ENCODE measurements at regions of chr7 and their contacts with region 1.

Region 1: GRCh38 chr7:150974468-150975391 is 3.4 kb downstream of the KCNH2 start:
- DNase-seq: peak in 4 of 5 donors; percentile 64 to 87 (median 82)
- ATAC-seq: peak in 2 of 4 donors; percentile 6
- H3K4me3 ChIP-seq: peak overlapping the region in 11 of 12 donors; percentile 11 to 59 (median 37)
- H3K27ac ChIP-seq: peak overlapping the region; percentile 66 to 99 (median 88)
- H3K4me1 ChIP-seq: peaks cover 0 to 94% (median 49%) of the 10 kb centered on the region in 12 donors
- H3K27me3 ChIP-seq: peaks cover 6 to 59% (median 21%) of the 10 kb centered on the region in 9 donors
- CTCF ChIP-seq: peak in 8 of 12 donors; percentile 10 to 41 (median 26)
- POLR2A ChIP-seq: no peak

Region 2: GRCh38 chr7:150787321-150788281 is 187.1 kb before region 1 on chr7:
- intact Hi-C with region 1: loop called in 1 of 10 experiments (anchors 10 kb)
- DNase-seq: peak in 2 of 5 donors; percentile 45
- ATAC-seq: peak; percentile 36 to 58 (median 38)
- H3K4me3 ChIP-seq: peak overlapping the region in 1 of 12 donors; percentile 17
- H3K27ac ChIP-seq: peak overlapping the region; percentile 68 to 95 (median 82)
- H3K4me1 ChIP-seq: peaks cover 4 to 68% (median 49%) of the 10 kb centered on the region in 12 donors
- H3K27me3 ChIP-seq: no peaks in the 10 kb centered on the region
- CTCF ChIP-seq: peak in 4 of 12 donors; percentile 9 to 21 (median 14)
- POLR2A ChIP-seq: no peak

Region 3: DNA sequence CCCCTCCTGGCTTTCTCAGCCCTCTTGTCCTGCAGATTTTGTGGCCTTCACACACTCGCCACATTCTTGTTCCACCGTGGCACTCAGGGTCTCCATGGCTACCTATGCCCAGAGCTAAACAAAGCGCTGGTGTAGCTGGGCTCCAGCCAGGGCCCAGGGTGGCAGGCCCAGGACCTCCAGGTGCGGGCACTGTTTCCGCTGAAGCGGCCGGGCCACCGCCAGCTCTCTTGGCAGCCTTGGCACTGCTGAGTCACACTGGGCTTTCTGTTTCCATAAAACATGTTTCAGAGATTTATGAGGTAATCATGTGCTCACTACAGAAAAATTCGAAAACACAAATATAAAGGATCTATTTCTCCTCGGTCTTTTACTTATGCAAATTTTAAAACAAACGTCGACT is 71.1 kb before region 1 on chr7:
- intact Hi-C with region 1: loop called in 1 of 10 experiments (anchors 2 kb)
- DNase-seq: peak; percentile 75 to 92 (median 87)
- ATAC-seq: peak; percentile 92 to 97 (median 94)
- H3K4me3 ChIP-seq: no peak overlapping the region
- H3K27ac ChIP-seq: peak overlapping the region in 11 of 12 donors; percentile 1 to 76 (median 66)
- H3K4me1 ChIP-seq: peaks cover 0 to 35% (median 8%) of the 10 kb centered on the region in 12 donors
- H3K27me3 ChIP-seq: peaks cover 0 to 38% (median 0%) of the 10 kb centered on the region in 9 donors
- CTCF ChIP-seq: peak in 2 of 12 donors; percentile 8 to 18
- POLR2A ChIP-seq: no peak

Region 4: DNA sequence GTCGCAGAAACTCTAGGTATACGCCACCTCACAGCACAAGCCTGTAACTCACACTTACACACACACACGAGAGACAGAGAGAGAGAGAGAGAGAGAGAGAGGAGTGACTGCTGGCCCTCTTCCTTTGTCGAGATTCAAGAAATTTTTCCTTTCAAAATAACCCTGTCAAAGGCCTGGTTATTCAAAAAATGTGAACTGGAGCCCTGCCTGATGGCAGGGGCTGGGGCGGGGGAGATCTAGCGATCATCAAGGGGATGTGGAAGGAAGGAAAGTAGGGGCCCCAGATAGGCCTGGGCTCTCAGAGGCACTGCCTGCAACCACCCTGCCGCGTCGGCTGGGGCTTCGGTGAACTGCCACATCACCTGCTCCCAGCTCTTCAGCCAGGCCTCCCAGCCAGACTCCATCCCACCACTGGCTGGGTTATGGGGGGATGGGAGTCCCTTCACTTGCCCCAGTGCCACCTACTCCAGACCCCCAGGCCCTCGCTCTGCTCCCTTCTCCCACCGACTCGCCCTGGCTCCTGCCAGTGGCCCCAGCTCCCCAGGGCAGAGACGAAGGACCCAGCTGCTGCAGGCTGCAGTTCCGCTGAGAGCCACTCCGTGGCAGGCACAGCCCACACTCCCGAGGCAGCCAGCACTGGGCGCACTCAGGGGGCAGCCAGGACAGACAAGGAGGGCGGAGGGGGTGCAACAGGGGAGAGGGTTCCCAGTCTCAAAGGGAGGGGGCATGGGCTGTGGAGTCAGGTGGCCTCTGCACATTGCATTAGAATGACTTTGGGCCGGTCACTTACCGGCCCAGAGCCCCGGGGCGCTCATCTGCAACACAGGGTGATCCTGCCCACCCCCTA is 12.0 kb before region 1 on chr7:
- intact Hi-C with region 1: loop called in 2 of 10 experiments (anchors 1 to 2 kb)
- DNase-seq: peak; percentile 69 to 82 (median 73)
- ATAC-seq: peak; percentile 15 to 64 (median 52)
- H3K4me3 ChIP-seq: no peak overlapping the region
- H3K27ac ChIP-seq: peak overlapping the region; percentile 70 to 96 (median 88)
- H3K4me1 ChIP-seq: peaks cover 0 to 93% (median 34%) of the 10 kb centered on the region in 12 donors
- H3K27me3 ChIP-seq: peaks cover 0 to 40% (median 3%) of the 10 kb centered on the region in 9 donors
- CTCF ChIP-seq: peak; percentile 73 to 90 (median 83)
- POLR2A ChIP-seq: no peak

Region 5: DNA sequence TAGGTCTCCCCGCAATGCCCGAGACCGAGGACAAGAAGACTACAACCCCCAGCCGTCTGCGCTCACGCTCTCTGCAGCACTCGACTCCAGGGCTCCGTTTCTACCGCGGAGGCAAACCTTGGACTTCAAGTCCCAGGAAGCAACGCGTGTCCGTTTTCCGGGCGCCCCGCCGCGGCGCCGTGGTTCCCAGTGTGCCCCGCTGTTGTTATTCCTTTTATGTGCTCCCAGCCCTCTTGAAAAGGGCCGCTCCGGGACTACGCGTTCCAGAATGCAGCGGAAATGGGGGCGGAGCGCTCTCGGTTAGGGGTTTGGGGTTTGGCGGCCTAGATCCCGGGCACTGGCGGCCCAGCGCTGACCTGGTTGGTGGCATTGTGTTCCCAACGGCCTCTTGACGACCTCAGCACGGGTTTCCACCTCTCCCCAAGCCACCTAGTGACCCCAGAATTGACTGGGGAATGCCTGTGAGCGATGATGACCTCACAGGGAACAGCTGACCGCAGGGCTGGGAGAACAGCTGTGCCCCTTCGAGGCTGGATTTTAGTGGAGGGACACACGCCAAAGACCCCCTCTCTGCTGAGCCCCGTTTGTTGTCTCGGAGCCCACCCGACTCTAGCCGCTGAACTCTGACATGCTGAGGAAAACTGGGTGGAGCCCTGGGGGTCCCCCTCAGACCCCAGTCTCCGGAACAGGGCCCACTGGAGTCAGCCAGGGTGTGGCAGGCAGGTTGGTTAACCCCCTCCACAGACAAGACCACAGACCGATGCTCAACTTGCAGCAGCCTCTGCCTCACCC is 83.5 kb after region 1 on chr7:
- intact Hi-C with region 1: no loop called
- DNase-seq: peak; percentile 98 to 100 (median 99)
- ATAC-seq: peak; percentile 88 to 93 (median 91)
- H3K4me3 ChIP-seq: peak overlapping the region in 11 of 12 donors; percentile 68 to 100 (median 92)
- H3K27ac ChIP-seq: peak overlapping the region; percentile 90 to 99 (median 98)
- H3K4me1 ChIP-seq: peaks cover 9 to 53% (median 46%) of the 10 kb centered on the region in 12 donors
- H3K27me3 ChIP-seq: no peaks in the 10 kb centered on the region
- CTCF ChIP-seq: peak in 1 of 12 donors; percentile 8
- POLR2A ChIP-seq: peak; percentile 68 to 97

Measured in heart left ventricle (tissue), 16 donors.